Mammary epithelial cell (primary cell): ENCODE measurements at regions of chr1 and their contacts with region 1.

Region 1: DNA sequence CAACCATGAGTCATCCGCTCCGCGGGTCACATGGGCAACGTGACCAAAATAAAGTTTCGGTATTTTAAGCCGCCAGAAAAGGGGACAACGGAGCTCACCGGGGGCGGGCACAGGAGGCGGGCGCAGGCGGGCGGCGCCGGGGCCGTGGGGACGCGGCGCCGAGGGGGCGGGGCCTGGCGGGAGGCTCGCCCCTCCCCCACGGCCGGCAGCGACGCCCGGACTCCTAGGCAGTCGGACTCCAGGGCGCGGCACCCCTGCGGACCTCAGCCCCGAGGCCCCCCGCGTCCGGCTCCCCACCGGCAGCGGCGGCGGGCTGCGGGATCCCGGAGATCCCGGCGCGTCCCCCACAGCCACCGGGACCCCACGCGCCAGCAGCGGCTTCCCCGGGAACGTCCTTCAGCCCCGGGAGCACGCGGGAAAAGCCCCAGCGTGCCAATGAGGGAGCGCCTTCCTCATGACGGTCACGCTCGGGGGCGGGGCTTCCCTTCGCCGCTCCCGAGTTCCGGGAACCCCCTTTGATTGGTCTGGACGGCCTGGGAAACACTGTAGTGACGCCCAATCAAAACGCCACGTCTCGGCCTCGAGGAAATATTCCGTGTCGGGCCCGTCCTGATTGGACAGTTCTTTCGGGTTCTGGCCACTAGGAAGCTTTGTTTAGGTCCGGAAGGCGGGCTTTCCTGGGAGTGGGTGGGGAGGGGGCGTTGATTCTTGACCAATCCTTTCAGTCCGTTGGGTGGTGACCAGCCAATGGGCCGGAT is 515 bp upstream of the CAMTA1 start:
- DNase-seq: peak; percentile 100
- H3K4me3 ChIP-seq: peak overlapping the region; percentile 74 to 86 (median 78)
- H3K27ac ChIP-seq: peak overlapping the region; percentile 94
- H3K4me1 ChIP-seq: peaks cover 6% of the 10 kb centered on the region
- H3K27me3 ChIP-seq: no peaks in the 10 kb centered on the region
- CTCF ChIP-seq: no peak

Region 2: GRCh38 chr1:6701437-6702153 is 83.1 kb before region 1 on chr1 and contains the start of gene DNAJC11:
- CTCF ChIA-PET with region 1: interaction called, 6 read pairs
- dilution Hi-C with region 1: no loop called
- in situ Hi-C with region 1: no loop called
- intact Hi-C with region 1: loop called (anchors 1 kb)
- DNase-seq: peak; percentile 78
- H3K4me3 ChIP-seq: peak within 1 kb of the TSS; percentile 68 to 98 (median 92)
- H3K27ac ChIP-seq: peak within 1 kb of the TSS; percentile 84
- H3K4me1 ChIP-seq: peaks cover 16% of the 10 kb centered on the region
- H3K27me3 ChIP-seq: no peaks in the 10 kb centered on the region
- CTCF ChIP-seq: peak; percentile 64 to 90
- total RNA-seq, gene DNAJC11: 27.3 to 69.3 TPM

Region 3: DNA sequence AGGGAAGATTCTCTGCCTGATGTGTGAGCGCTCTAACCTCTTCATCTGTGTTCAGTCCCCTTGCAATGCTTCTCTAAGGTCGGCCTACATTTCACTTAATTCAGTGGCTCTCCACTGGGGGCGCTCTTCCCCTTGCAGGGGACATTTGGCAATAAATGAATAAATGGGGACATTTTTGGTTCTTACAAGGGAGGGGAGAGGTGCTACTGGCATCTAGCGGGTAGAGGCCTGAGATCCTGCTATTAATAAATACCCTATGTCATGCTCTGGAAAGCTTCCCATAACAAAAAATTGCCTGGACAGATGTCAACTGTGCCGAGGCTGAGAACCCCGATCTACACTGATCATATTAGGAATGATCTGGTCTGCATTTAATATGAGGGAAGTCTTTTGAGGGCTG is 57.2 kb before region 1 on chr1:
- CTCF ChIA-PET with region 1: no interaction called
- dilution Hi-C with region 1: no loop called
- in situ Hi-C with region 1: loop called in 1 of 2 experiments (anchors 10 kb)
- intact Hi-C with region 1: loop called (anchors 1 kb)
- DNase-seq: peak; percentile 34
- H3K4me3 ChIP-seq: no peak overlapping the region
- H3K27ac ChIP-seq: no peak overlapping the region
- H3K4me1 ChIP-seq: peaks cover 11% of the 10 kb centered on the region
- H3K27me3 ChIP-seq: no peaks in the 10 kb centered on the region
- CTCF ChIP-seq: peak; percentile 91 to 95

Region 4: GRCh38 chr1:6762060-6762459 is 22.7 kb before region 1 on chr1:
- CTCF ChIA-PET with region 1: no interaction called
- dilution Hi-C with region 1: no loop called
- in situ Hi-C with region 1: no loop called
- intact Hi-C with region 1: loop called (anchors 2 kb)
- DNase-seq: peak; percentile 93
- H3K4me3 ChIP-seq: no peak overlapping the region
- H3K27ac ChIP-seq: peak overlapping the region; percentile 74
- H3K4me1 ChIP-seq: peaks cover 4% of the 10 kb centered on the region
- H3K27me3 ChIP-seq: no peaks in the 10 kb centered on the region
- CTCF ChIP-seq: no peak

Region 5: DNA sequence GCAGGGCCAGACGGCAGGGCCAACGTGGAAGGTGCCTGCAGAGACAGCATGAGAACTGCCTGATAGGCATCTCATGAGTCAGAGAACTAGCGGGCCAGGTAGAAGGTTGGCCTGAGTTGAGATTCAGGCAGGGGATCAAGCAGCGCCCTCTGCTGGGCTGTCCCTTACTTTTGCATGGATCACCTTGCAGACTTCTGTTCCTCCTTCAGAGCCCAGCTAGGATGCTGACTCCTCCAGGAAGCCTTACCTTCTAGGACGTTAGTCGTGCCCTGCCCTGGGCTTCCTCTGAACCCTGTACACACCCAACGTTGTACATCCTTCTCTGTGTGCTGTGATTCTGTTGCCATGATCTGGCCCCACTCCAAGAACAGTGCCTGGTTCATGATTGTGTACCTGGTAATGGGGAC is 755.0 kb after region 1 on chr1:
- CTCF ChIA-PET with region 1: no interaction called
- dilution Hi-C with region 1: no loop called
- in situ Hi-C with region 1: no loop called
- intact Hi-C with region 1: loop called (anchors 10 kb)
- DNase-seq: peak; percentile 81
- H3K4me3 ChIP-seq: no peak overlapping the region
- H3K27ac ChIP-seq: no peak overlapping the region
- H3K4me1 ChIP-seq: no peaks in the 10 kb centered on the region
- H3K27me3 ChIP-seq: peaks cover 2% of the 10 kb centered on the region
- CTCF ChIP-seq: peak; percentile 77 to 94